ENCODE measurements at regions of chr9 and their contacts with region 1.

Region 1: GRCh38 chr9:97632985-97633858 is at the starts of genes NCBP1 and TSTD2:
- DNase-seq: peak; percentile 96
- ATAC-seq: peak; percentile 94
- H3K4me3 ChIP-seq: peak within 1 kb of the TSS; percentile 95 to 97
- H3K27ac ChIP-seq: peak within 1 kb of the TSS; percentile 95
- H3K4me1 ChIP-seq: peaks cover 9 to 15% of the 10 kb centered on the region in 2 experiments; a peak in 2 of 4 replicates
- H3K27me3 ChIP-seq: no peaks in the 10 kb centered on the region
- CTCF ChIP-seq: no peak
- POLR2A ChIP-seq: peak; percentile 82
- RAD21 ChIP-seq: no peak
- total RNA-seq, gene NCBP1: 32.9 TPM
- total RNA-seq, gene TSTD2: 16.0 TPM

Region 2: GRCh38 chr9:96256800-96257199 is 1376.4 kb before region 1 on chr9:
- CTCF ChIA-PET with region 1: no interaction called
- POLR2A ChIA-PET with region 1: no interaction called
- RAD21 ChIA-PET with region 1: no interaction called
- intact Hi-C with region 1: loop called (anchors 5 kb)
- DNase-seq: peak; percentile 82
- ATAC-seq: peak; percentile 99
- H3K4me3 ChIP-seq: peak overlapping the region; percentile 47 to 55
- H3K27ac ChIP-seq: peak overlapping the region; percentile 31; the same call in 1 of the 2 replicates
- H3K4me1 ChIP-seq: peaks cover 20 to 28% of the 10 kb centered on the region in 2 experiments; a peak in 3 of 4 replicates
- H3K27me3 ChIP-seq: no peaks in the 10 kb centered on the region
- CTCF ChIP-seq: no peak
- POLR2A ChIP-seq: no peak
- RAD21 ChIP-seq: no peak

Region 3: DNA sequence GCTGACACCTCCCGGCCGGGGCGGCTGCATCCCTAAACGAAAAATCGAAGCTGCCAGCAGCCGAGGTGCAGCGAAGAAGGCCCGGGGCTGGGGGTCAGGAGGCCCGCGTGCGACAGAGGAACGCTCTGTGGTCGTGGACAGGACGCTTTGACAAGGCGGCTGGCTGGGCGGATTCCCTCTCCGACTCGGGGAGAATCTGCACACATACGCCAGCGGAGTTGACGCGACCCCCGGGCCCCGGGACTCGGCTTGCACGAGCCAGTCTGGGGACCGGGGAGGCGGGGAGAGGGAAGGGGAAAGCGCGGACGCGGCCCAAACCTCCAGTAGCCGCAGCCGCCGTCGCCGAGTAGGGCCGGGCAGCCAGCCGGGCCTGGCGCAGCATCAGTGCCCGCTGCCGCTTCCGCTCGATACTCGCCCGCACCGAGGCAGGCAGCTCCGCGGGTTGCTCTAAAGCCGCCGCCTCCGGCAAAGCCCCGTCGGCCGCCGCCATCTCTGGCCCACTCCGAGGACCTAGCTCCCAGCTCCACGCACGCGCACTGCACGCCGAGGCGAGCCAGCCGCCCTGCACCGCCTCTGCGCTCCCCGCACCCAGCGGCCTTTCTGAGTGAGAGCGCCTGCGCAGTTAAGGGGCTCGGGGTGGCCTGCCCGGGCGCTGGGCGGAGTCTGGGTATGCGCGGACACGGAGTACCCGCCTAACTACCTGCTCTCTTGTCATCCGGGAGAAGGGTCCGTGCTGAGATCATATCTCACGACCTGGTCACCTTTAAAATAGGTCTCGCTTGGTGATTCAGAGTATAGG is 63.8 kb after region 1 on chr9 and contains the start of gene XPA:
- CTCF ChIA-PET with region 1: no interaction called
- POLR2A ChIA-PET with region 1: interaction called, 4 read pairs
- RAD21 ChIA-PET with region 1: no interaction called
- intact Hi-C with region 1: loop called (anchors 1 kb)
- DNase-seq: peak; percentile 87
- ATAC-seq: peak; percentile 98
- H3K4me3 ChIP-seq: peak within 1 kb of the TSS; percentile 78 to 95
- H3K27ac ChIP-seq: peak within 1 kb of the TSS; percentile 63
- H3K4me1 ChIP-seq: peaks cover 18 to 32% of the 10 kb centered on the region in 2 experiments
- H3K27me3 ChIP-seq: no peaks in the 10 kb centered on the region
- CTCF ChIP-seq: no peak
- POLR2A ChIP-seq: peak; percentile 91
- RAD21 ChIP-seq: no peak
- total RNA-seq, gene XPA: 9.3 TPM

Region 4: DNA sequence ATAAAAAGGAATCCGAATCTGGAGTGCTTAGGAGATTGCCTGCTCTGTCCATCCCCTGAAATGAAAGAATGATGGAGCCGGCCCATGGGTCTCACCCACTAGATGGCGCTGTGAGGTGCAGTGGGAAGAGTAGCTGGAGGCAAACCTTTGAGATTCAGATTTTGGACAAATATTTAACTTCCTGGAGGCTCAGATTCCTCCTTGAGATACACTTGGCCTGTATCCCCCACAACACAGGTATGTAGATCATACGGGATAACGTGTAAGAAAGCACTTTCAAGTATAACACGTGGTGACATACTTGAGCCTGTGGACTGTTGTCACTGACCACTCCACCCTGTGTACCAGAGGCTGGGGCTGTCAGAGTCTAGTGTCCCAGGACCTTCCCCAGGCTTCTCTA is 256.8 kb after region 1 on chr9:
- CTCF ChIA-PET with region 1: no interaction called
- POLR2A ChIA-PET with region 1: no interaction called
- RAD21 ChIA-PET with region 1: no interaction called
- intact Hi-C with region 1: no loop called
- DNase-seq: no peak
- ATAC-seq: peak; percentile 89
- H3K4me3 ChIP-seq: no peak overlapping the region
- H3K27ac ChIP-seq: no peak overlapping the region
- H3K4me1 ChIP-seq: no peaks in the 10 kb centered on the region
- H3K27me3 ChIP-seq: no peaks in the 10 kb centered on the region
- CTCF ChIP-seq: peak; percentile 39 to 97 (median 94); a peak in 5 of 6 replicates
- POLR2A ChIP-seq: no peak
- RAD21 ChIP-seq: peak; percentile 42; the same call in 1 of the 2 replicates